WTC11 (cell line): ENCODE measurements at regions of chr19 and their contacts with region 1.

Region 1: GRCh38 chr19:53597023-53597422 is 34.8 kb upstream of the DPRX start:
- DNase-seq: no peak
- ATAC-seq: no peak
- H3K4me3 Mint-ChIP-seq: no peak overlapping the region
- H3K27ac Mint-ChIP-seq: peak overlapping the region; percentile 97
- H3K4me1 Mint-ChIP-seq: peaks cover 53% of the 10 kb centered on the region
- H3K27me3 Mint-ChIP-seq: no peaks in the 10 kb centered on the region
- CTCF ChIP-seq: no peak

Region 2: GRCh38 chr19:53504885-53505284 is 92.1 kb before region 1 on chr19:
- CTCF ChIA-PET with region 1: no interaction called
- POLR2A ChIA-PET with region 1: no interaction called
- DNase-seq: no peak
- ATAC-seq: no peak
- H3K4me3 Mint-ChIP-seq: peak overlapping the region; percentile 58
- H3K27ac Mint-ChIP-seq: peak overlapping the region; percentile 24; the same call in 1 of the 2 replicates
- H3K4me1 Mint-ChIP-seq: peaks cover 24% of the 10 kb centered on the region
- H3K27me3 Mint-ChIP-seq: no peaks in the 10 kb centered on the region; the same call in 1 of the 2 replicates
- CTCF ChIP-seq: no peak

Region 3: GRCh38 chr19:53580976-53581800 is 15.8 kb before region 1 on chr19:
- CTCF ChIA-PET with region 1: interaction called, 12 read pairs
- POLR2A ChIA-PET with region 1: interaction called, 3 read pairs
- DNase-seq: peak; percentile 22
- ATAC-seq: peak; percentile 72
- H3K4me3 Mint-ChIP-seq: no peak overlapping the region
- H3K27ac Mint-ChIP-seq: peak overlapping the region; percentile 91
- H3K4me1 Mint-ChIP-seq: peaks cover 20% of the 10 kb centered on the region
- H3K27me3 Mint-ChIP-seq: no peaks in the 10 kb centered on the region
- CTCF ChIP-seq: no peak

Region 4: GRCh38 chr19:53612755-53613154 is 15.7 kb after region 1 on chr19:
- CTCF ChIA-PET with region 1: interaction called, 4 read pairs
- POLR2A ChIA-PET with region 1: interaction called, 11 read pairs
- DNase-seq: peak; percentile 82
- ATAC-seq: peak; percentile 87
- H3K4me3 Mint-ChIP-seq: no peak overlapping the region
- H3K27ac Mint-ChIP-seq: peak overlapping the region; percentile 95
- H3K4me1 Mint-ChIP-seq: peaks cover 28% of the 10 kb centered on the region
- H3K27me3 Mint-ChIP-seq: no peaks in the 10 kb centered on the region
- CTCF ChIP-seq: no peak

Region 5: DNA sequence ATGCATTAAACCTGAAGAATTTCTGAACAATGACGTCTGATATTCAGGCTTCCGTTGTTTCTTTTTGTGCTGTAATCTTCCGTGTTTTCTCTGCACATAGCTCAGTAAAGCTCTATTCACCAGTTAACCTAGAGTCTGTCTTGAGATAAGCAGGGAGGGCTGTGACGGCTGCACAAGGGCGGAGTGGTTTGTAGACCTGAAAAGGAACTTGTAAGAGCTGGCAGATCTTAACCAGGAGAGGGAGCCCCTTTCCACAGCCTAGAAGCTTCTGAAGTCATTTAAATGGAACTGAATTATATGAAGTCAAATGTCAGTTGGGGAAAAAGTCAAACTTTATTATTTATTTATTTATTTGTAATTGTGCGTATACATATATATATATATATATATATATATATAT is 62.3 kb after region 1 on chr19:
- CTCF ChIA-PET with region 1: interaction called, 67 read pairs
- POLR2A ChIA-PET with region 1: interaction called, 7 read pairs
- DNase-seq: peak; percentile 69
- ATAC-seq: peak; percentile 86
- H3K4me3 Mint-ChIP-seq: no peak overlapping the region
- H3K27ac Mint-ChIP-seq: peak overlapping the region; percentile 93
- H3K4me1 Mint-ChIP-seq: peaks cover 43% of the 10 kb centered on the region
- H3K27me3 Mint-ChIP-seq: peaks cover 8% of the 10 kb centered on the region
- CTCF ChIP-seq: peak; percentile 35; the same call in 1 of the 2 replicates